ENCODE measurements at regions of chr16 and their contacts with region 1.

Region 1: DNA sequence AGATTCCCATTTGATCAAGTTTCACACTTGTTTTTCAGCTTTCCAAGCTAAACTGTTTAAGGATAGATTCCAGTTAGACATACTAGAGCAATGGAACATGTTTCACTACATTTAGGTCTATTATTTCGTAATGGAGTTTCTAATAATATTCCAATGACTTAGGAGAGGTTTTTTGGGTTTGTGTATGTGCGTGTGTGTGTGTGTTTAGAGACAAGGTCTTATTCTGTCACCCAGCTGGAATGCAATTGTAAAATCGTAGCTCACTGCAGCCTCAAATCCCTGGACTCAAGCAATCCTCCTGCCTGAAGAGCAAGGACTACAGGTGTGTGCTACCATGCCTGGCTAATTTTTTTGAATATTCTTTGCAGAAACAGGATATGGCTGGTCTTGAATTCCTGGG is 426.3 kb downstream of the ZFHX3 start:
- DNase-seq: no peak
- ATAC-seq: no peak
- H3K4me3 ChIP-seq: no peak overlapping the region
- H3K4me3 Mint-ChIP-seq: no peak overlapping the region
- H3K27ac ChIP-seq: no peak overlapping the region
- H3K27ac Mint-ChIP-seq: no peak overlapping the region
- H3K4me1 ChIP-seq: no peaks in the 10 kb centered on the region
- H3K4me1 Mint-ChIP-seq: no peaks in the 10 kb centered on the region
- H3K27me3 ChIP-seq: no peaks in the 10 kb centered on the region
- H3K27me3 Mint-ChIP-seq: peaks cover 0 to 4% (median 0%) of the 10 kb centered on the region in 5 donors

Region 2: GRCh38 chr16:72604375-72604774 is 17.3 kb before region 1 on chr16:
- CTCF ChIA-PET with region 1: no interaction called
- POLR2A ChIA-PET with region 1: no interaction called
- intact Hi-C with region 1: loop called in 1 of 2 experiments (anchors 1 kb)
- DNase-seq: no peak
- ATAC-seq: no peak
- H3K4me3 ChIP-seq: no peak overlapping the region
- H3K4me3 Mint-ChIP-seq: no peak overlapping the region
- H3K27ac ChIP-seq: no peak overlapping the region
- H3K27ac Mint-ChIP-seq: no peak overlapping the region
- H3K4me1 ChIP-seq: no peaks in the 10 kb centered on the region
- H3K4me1 Mint-ChIP-seq: no peaks in the 10 kb centered on the region
- H3K27me3 ChIP-seq: no peaks in the 10 kb centered on the region
- H3K27me3 Mint-ChIP-seq: no peaks in the 10 kb centered on the region